Right ventricle myocardium inferior (tissue), 1 donor: ENCODE measurements at regions of chr11 and their contacts with region 1.

Region 1: DNA sequence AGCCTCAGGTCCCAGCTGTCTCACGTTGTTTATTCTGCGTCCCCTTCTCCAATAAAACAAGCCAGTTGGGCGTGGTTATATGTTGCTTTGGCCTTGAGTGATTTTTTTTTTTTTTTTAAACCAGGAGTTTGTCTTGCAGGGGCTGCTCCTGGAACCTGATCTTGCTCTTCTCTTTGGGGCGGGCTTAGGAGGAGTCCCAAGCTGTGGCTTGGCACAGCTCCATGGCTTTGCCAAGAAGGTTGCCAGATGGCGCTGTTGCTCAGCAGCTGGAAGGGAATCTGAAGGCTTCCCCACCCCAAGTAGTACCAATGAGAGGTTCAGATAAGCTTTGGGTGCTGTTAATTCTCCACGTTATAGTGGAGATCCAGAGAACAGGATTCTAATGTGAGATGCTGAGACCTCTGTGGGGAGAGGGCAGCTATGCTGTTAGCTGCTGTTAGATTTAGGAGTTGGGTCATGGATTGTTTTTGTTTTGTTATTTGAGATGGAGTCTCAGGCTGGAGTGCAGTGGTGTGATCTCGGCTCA is 2.0 kb upstream of the FERMT3 start:
- DNase-seq: peak; percentile 92
- ATAC-seq: peak; percentile 47

Region 2: DNA sequence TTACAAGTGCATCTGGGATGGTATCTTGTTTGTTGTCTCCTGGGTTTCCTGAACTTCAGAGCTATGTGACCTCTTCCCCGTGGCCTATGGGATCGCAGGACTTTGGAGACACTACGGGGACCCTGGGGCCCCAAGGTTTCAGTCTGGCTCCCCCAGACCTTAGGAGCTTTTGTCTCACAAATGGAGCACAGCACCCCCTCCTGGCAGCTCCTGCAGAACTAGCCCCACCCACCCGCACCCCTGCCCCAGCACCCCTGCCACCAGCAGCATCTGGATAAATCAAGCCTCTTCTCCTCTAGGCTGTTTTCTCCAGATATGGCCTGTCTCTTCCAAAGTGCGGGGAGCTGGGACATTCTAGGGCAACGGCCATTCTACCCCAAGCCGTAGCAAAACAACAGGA is 297.9 kb before region 1 on chr11:
- intact Hi-C with region 1: no loop called
- DNase-seq: no peak
- ATAC-seq: no peak

Region 3: DNA sequence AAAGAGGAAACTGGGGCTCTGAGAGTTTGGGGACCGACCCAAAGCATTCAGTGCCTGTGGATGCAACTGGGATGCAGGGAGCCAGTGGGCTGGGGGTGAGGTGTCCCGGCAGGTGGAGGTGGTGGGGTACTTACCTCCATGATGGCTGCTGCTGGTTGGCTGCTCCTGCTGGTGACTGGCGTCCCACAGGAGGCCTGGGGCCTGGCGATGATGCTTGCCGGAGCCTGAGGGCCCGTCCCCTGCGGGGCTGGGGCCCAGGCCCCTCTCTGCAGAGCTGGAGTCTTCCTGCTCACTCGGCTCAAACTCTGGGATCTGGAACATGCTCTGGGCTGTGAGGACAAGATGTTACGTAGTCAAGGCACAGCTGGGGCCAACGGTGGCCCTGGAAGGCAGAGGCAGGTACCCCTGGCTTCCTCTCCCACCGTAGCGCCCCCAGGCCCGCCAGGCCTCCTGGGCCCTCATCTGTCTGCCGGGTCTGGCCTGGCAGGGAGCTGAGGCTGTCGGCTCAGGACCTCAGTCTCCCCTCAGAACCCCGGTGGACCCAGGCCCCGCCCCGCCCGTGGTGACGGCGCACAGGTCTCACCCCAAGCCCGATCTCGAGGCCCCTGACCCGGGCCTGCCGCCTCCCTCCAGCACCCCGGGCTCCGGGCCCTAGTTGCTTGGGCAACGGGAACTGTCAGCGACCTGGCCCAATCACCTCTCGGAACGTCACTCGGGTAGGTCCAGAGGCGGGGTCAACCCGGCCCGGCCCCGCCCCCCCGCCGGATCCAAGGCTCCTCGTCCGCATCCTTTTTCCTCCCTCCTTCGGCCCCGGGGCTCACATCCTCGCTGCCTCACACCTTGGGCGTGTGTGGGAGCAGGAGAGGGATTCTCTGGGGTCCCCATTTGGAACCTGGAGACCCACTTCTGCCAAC is 79.8 kb after region 1 on chr11 and contains the start of gene BAD:
- intact Hi-C with region 1: loop called (anchors 5 kb)
- DNase-seq: peak; percentile 96
- ATAC-seq: peak; percentile 92
- total RNA-seq, gene BAD: 89.1 TPM